GM23248 (cell line): ENCODE measurements at regions of chr3 and their contacts with region 1.

Region 1: GRCh38 chr3:31610700-31611275 is 78.1 kb downstream of the STT3B start:
- DNase-seq: peak; percentile 63
- H3K4me3 ChIP-seq: no peak overlapping the region
- H3K27ac ChIP-seq: no peak overlapping the region
- H3K4me1 ChIP-seq: 0 out of 2 replicates have a peak, but pooled peaks cover 4% of the 10 kb centered on the region
- H3K27me3 ChIP-seq: no peaks in the 10 kb centered on the region

Region 2: GRCh38 chr3:32143849-32144757 is 533.3 kb after region 1 on chr3:
- in situ Hi-C with region 1: loop called (anchors 25 kb)
- DNase-seq: peak; percentile 88
- H3K4me3 ChIP-seq: no peak overlapping the region
- H3K27ac ChIP-seq: no peak overlapping the region
- H3K4me1 ChIP-seq: peaks cover 4% of the 10 kb centered on the region
- H3K27me3 ChIP-seq: no peaks in the 10 kb centered on the region